ENCODE measurements at regions of chr7 and their contacts with region 1.

Region 1: DNA sequence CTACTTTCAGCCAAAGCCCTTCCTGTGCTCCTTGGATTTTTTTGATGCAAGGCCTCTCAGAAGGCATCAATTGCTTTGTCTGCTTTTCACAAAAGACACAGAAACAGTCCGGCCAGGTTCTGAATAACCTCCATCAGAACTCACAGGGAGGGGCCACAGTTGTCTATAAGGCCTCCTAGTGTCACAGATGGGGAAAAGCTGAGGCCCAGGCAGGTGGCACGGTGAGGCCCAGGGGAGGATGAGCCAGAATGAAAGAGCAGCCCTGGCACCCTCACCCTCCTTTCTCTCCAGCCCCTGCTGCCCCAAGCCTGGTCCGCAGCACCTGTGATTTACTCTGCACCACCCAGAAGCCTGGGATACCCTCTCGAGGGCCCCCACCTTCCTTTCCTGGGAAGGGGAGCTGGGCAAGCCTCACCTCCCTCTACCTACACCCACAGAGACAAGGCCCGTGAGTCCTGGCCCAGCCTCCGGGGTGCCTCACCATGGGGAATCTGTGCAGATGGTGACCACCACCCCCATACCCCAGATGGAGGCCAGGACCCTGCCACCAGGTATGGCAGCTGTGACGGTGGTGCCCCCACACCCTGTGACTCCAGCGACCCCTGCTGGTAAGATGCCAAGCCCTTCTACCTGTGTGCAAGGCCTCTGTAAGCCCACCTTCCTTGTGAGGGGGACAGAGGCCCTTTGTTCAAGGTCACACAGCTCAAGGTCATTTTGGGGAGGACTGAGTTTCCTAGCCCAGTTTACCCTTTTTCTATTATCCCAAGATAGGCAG is 26.2 kb upstream of the ZNF467 start:
- DNase-seq: peak; percentile 76
- ATAC-seq: peak; percentile 74
- H3K4me3 Mint-ChIP-seq: no peak overlapping the region
- H3K27ac Mint-ChIP-seq: no peak overlapping the region
- H3K4me1 Mint-ChIP-seq: no peaks in the 10 kb centered on the region
- H3K27me3 Mint-ChIP-seq: no peaks in the 10 kb centered on the region
- CTCF ChIP-seq: peak; percentile 59

Region 2: DNA sequence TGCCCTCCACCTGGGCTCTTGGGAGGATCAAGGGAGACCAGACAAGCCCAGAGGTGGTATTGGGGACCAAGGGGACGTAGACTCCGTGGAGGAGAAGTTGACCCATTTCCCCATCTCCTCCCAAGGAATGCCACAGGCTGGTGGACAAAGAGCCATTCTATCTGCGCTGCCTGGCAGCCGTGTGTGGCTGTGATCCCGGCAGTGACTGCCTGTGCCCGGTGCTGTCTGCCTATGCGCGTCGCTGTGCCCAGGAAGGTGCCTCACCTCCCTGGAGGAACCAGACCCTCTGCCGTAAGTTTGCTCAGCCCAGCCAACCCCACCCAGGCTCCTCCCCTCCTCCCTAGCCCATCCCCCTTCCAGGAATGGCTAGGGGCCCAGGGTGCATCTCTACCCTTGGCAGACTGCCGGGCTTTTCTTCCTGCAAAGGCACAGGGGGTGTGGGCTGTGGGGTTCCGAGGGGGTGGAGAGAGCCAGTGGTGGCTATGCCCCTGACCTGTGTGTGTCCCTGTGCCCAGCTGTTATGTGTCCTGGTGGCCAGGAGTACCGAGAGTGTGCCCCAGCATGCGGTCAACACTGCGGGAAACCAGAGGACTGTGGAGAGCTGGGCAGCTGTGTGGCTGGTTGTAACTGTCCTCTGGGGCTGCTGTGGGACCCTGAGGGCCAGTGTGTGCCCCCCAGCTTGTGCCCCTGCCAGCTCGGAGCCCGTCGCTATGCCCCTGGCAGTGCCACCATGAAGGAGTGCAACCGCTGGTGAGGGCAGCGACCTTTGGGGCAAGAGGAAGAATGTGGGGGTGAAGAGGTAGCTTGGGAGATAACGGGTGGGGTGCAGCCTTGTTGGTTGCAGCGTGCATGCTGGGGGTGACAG is 16.0 kb before region 1 on chr7:
- CTCF ChIA-PET with region 1: interaction called, 11 read pairs
- POLR2A ChIA-PET with region 1: no interaction called
- intact Hi-C with region 1: no loop called
- DNase-seq: no peak
- ATAC-seq: no peak
- H3K4me3 Mint-ChIP-seq: no peak overlapping the region
- H3K27ac Mint-ChIP-seq: no peak overlapping the region
- H3K4me1 Mint-ChIP-seq: no peaks in the 10 kb centered on the region
- H3K27me3 Mint-ChIP-seq: peaks cover under 1% of the 10 kb centered on the region
- CTCF ChIP-seq: no peak